Colonic mucosa (tissue), 4 donors: ENCODE measurements at regions of chrX and their contacts with region 1.

Region 1: GRCh38 chrX:148049441-148049840 is 68.3 kb downstream of the FMR1NB start:
- DNase-seq: no peak
- H3K4me3 ChIP-seq: no peak overlapping the region
- H3K27ac ChIP-seq: no peak overlapping the region
- H3K4me1 ChIP-seq: no peaks in the 10 kb centered on the region
- H3K27me3 ChIP-seq: peaks cover 3% of the 10 kb centered on the region
- CTCF ChIP-seq: peak; percentile 31

Region 2: DNA sequence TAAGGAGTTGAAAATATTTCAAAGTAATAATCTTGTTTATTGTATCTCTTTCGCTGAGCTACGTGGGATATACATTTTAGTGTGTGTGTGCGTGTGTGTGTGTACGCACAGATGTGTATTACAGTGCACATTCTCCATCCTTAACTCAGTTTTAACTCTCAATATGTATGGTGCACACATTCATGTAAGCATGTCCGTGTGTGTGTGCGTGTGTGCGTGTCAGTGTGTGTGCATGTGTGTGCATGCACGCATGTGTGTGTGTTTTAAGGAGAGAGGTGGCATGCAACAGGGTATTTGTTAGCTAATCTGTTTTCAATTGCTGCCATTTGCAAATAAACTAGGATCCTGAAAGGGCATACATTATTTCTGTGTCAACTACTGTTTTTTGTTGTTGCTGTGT is 970.0 kb before region 1 on chrX:
- intact Hi-C with region 1: no loop called
- DNase-seq: no peak
- H3K4me3 ChIP-seq: no peak overlapping the region
- H3K27ac ChIP-seq: no peak overlapping the region
- H3K4me1 ChIP-seq: no peaks in the 10 kb centered on the region
- H3K27me3 ChIP-seq: no peaks in the 10 kb centered on the region
- CTCF ChIP-seq: no peak

Region 3: DNA sequence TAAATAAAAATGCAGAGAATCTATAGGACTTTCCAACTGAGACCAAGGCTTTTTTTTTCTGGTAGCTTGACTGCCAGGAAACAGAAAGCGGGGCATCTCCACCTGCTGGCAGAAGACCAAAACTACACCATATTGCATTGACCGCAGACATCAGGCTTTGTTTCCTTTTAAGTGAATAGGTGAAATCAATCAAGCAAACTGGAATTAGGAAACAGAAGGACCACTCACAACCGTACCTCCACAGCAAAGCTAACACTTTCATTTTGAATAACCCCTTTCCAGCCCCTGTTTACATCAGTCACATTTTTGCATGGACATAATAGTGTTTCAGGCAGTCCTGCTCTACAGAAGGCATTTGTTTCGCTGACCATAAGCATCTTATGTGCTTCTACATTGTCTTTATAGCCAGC is 1237.5 kb after region 1 on chrX:
- intact Hi-C with region 1: loop called (anchors 5 kb)
- DNase-seq: peak; percentile 25
- H3K4me3 ChIP-seq: no peak overlapping the region
- H3K27ac ChIP-seq: no peak overlapping the region
- H3K4me1 ChIP-seq: no peaks in the 10 kb centered on the region
- H3K27me3 ChIP-seq: no peaks in the 10 kb centered on the region
- CTCF ChIP-seq: peak; percentile 56

Region 4: GRCh38 chrX:149470955-149471354 is 1421.5 kb after region 1 on chrX:
- intact Hi-C with region 1: loop called (anchors 5 kb)
- DNase-seq: peak; percentile 67
- H3K4me3 ChIP-seq: no peak overlapping the region
- H3K27ac ChIP-seq: no peak overlapping the region
- H3K4me1 ChIP-seq: no peaks in the 10 kb centered on the region
- H3K27me3 ChIP-seq: no peaks in the 10 kb centered on the region
- CTCF ChIP-seq: peak; percentile 76